ENCODE measurements at regions of chr17 and their contacts with region 1.

Region 1: GRCh38 chr17:76271669-76272540 is 6.8 kb downstream of the UBALD2 start:
- DNase-seq: peak; percentile 97
- ATAC-seq: peak; percentile 64
- H3K4me3 Mint-ChIP-seq: peak overlapping the region; percentile 96
- H3K27ac Mint-ChIP-seq: peak overlapping the region; percentile 99
- H3K4me1 Mint-ChIP-seq: peaks cover 47% of the 10 kb centered on the region
- H3K27me3 Mint-ChIP-seq: no peaks in the 10 kb centered on the region
- CTCF ChIP-seq: no peak

Region 2: GRCh38 chr17:76103274-76104139 is 168.4 kb before region 1 on chr17 and contains the start of gene EXOC7:
- CTCF ChIA-PET with region 1: interaction called, 3 read pairs
- POLR2A ChIA-PET with region 1: interaction called, 13 read pairs
- intact Hi-C with region 1: no loop called
- DNase-seq: peak; percentile 94
- ATAC-seq: peak; percentile 95
- H3K4me3 Mint-ChIP-seq: peak within 1 kb of the TSS; percentile 93
- H3K27ac Mint-ChIP-seq: peak within 1 kb of the TSS; percentile 97
- H3K4me1 Mint-ChIP-seq: peaks cover 25% of the 10 kb centered on the region
- H3K27me3 Mint-ChIP-seq: no peaks in the 10 kb centered on the region
- CTCF ChIP-seq: no peak
- total RNA-seq, gene EXOC7: 53.5 to 64.9 TPM

Region 3: DNA sequence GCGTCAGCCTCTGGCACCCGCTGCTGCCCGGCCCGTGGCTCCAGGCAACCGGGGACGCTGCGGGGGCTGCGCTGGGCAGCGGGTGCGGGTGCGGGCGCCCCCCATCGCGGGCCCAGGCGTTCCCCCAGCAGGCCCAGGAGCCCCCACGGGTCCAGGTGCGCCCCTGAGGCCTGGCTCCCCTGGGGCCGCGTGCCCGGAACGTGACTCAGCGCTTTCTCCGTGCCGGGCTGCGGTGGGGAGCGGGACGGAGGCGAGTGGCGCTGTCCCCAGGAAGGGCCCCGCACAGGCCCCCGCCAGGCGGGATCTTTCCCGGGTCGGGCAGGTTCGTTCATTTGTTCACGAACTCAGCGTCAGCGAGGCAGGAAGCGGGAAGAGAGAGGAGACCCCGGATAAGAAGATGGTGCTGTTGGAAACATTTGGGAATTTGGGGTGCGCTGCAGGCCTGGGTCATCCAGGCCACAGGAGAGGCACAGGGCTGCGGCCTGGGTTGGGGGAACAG is 149.9 kb before region 1 on chr17:
- CTCF ChIA-PET with region 1: interaction called, 84 read pairs
- POLR2A ChIA-PET with region 1: interaction called, 83 read pairs
- intact Hi-C with region 1: no loop called
- DNase-seq: peak; percentile 40
- ATAC-seq: peak; percentile 10
- H3K4me3 Mint-ChIP-seq: peak overlapping the region; percentile 45
- H3K27ac Mint-ChIP-seq: peak overlapping the region; percentile 77
- H3K4me1 Mint-ChIP-seq: peaks cover 20% of the 10 kb centered on the region
- H3K27me3 Mint-ChIP-seq: no peaks in the 10 kb centered on the region
- CTCF ChIP-seq: no peak

Region 4: GRCh38 chr17:76141212-76142038 is 130.5 kb before region 1 on chr17 and contains the start of gene FOXJ1:
- CTCF ChIA-PET with region 1: interaction called, 5 read pairs
- POLR2A ChIA-PET with region 1: interaction called, 56 read pairs
- intact Hi-C with region 1: loop called (anchors 5 kb)
- DNase-seq: peak; percentile 92
- ATAC-seq: peak; percentile 67
- H3K4me3 Mint-ChIP-seq: peak within 1 kb of the TSS; percentile 72
- H3K27ac Mint-ChIP-seq: peak within 1 kb of the TSS; percentile 46
- H3K4me1 Mint-ChIP-seq: peaks cover 57% of the 10 kb centered on the region
- H3K27me3 Mint-ChIP-seq: peaks cover 1% of the 10 kb centered on the region
- CTCF ChIP-seq: no peak
- total RNA-seq, gene FOXJ1: 11.1 to 11.6 TPM

Region 5: GRCh38 chr17:76147211-76148014 is 124.5 kb before region 1 on chr17:
- CTCF ChIA-PET with region 1: interaction called, 5 read pairs
- POLR2A ChIA-PET with region 1: interaction called, 56 read pairs
- intact Hi-C with region 1: loop called (anchors 5 kb)
- DNase-seq: no peak
- ATAC-seq: no peak
- H3K4me3 Mint-ChIP-seq: no peak overlapping the region
- H3K27ac Mint-ChIP-seq: peak overlapping the region; percentile 94
- H3K4me1 Mint-ChIP-seq: peaks cover 70% of the 10 kb centered on the region
- H3K27me3 Mint-ChIP-seq: no peaks in the 10 kb centered on the region
- CTCF ChIP-seq: peak; percentile 16

Region 6: DNA sequence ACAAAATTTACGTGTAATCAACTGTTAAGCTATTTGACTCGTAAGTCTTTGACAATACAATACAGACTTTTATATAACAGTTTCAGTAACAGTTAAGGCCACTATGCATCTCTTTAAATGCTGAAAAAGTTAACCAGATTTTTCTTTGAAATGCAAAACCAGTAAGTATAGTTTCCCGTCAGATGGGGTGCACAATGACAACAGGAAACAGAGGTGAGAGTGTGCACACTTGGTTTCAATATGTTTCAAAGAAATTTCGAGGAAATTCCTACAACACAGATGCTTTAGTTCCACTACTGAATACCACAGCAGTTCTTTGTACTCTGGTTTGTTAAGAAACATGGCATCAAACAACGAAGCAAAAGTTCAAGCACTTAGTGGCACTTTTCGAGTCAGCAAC is 80.0 kb before region 1 on chr17:
- CTCF ChIA-PET with region 1: interaction called, 10 read pairs
- POLR2A ChIA-PET with region 1: interaction called, 700 read pairs
- intact Hi-C with region 1: loop called (anchors 5 kb)
- DNase-seq: peak; percentile 65
- ATAC-seq: peak; percentile 82
- H3K4me3 Mint-ChIP-seq: peak overlapping the region; percentile 68
- H3K27ac Mint-ChIP-seq: peak overlapping the region; percentile 97
- H3K4me1 Mint-ChIP-seq: peaks cover 77% of the 10 kb centered on the region
- H3K27me3 Mint-ChIP-seq: no peaks in the 10 kb centered on the region
- CTCF ChIP-seq: no peak

Measured in activated CD8-positive, alpha-beta T cell treated with anti-CD3 and anti-CD28 coated beads for 36 hours (primary cell).